Ascending aorta (tissue), 2 donors: ENCODE measurements at regions of chr1 and their contacts with region 1.

Region 1: GRCh38 chr1:94199398-94199797 is 38.0 kb downstream of the ARHGAP29 start:
- DNase-seq: no peak
- H3K4me3 ChIP-seq: no peak overlapping the region
- H3K27ac ChIP-seq: no peak overlapping the region
- H3K4me1 ChIP-seq: no peaks in the 10 kb centered on the region
- H3K27me3 ChIP-seq: no peaks in the 10 kb centered on the region
- CTCF ChIP-seq: no peak

Region 2: GRCh38 chr1:94228640-94229375 is 29.4 kb after region 1 on chr1:
- intact Hi-C with region 1: loop called (anchors 1 kb)
- DNase-seq: no peak
- H3K4me3 ChIP-seq: no peak overlapping the region
- H3K27ac ChIP-seq: no peak overlapping the region
- H3K4me1 ChIP-seq: peaks cover 0 to 5% of the 10 kb centered on the region in 2 donors
- H3K27me3 ChIP-seq: no peaks in the 10 kb centered on the region
- CTCF ChIP-seq: no peak

Region 3: GRCh38 chr1:94270801-94271203 is 71.4 kb after region 1 on chr1:
- intact Hi-C with region 1: no loop called
- DNase-seq: no peak
- H3K4me3 ChIP-seq: no peak overlapping the region
- H3K27ac ChIP-seq: no peak overlapping the region
- H3K4me1 ChIP-seq: no peaks in the 10 kb centered on the region
- H3K27me3 ChIP-seq: no peaks in the 10 kb centered on the region
- CTCF ChIP-seq: no peak

Region 4: DNA sequence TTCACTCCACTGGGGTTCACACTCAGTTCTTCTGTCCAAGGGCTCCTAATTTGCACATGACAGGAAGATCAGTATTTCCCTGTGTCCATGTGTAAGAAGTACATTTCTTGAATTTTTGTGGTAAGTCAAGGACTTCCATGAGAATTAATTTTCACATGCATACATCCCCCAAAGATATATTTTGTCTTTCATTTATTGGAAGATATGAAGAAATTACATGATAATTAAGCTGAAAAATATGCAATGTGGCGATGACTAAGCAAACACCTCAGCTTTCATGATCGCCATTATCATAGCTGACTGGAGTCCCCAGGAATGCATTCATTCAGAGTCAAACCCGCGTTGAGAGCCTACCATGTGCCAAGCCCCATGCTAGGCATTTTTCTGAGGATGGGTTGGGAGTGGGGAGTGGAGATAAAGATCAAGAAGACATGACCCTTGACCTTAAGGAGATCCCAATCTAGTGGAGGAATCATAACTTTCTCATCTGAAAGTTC is 446.8 kb after region 1 on chr1:
- intact Hi-C with region 1: no loop called
- DNase-seq: no peak
- H3K4me3 ChIP-seq: no peak overlapping the region
- H3K27ac ChIP-seq: no peak overlapping the region
- H3K4me1 ChIP-seq: peaks cover 7 to 11% of the 10 kb centered on the region in 2 donors
- H3K27me3 ChIP-seq: no peaks in the 10 kb centered on the region
- CTCF ChIP-seq: no peak